ENCODE measurements at regions of chr21 and their contacts with region 1.

Region 1: GRCh38 chr21:36419996-36420395 is 34.8 kb downstream of the CHAF1B start:
- DNase-seq: peak; percentile 70 to 79
- H3K4me3 ChIP-seq: no peak overlapping the region
- H3K27ac ChIP-seq: no peak overlapping the region
- H3K4me1 ChIP-seq: peaks cover 0 to 4% (median 4%) of the 10 kb centered on the region in 4 experiments; a peak in 4 of 7 replicates
- H3K27me3 ChIP-seq: no peaks in the 10 kb centered on the region
- CTCF ChIP-seq: peak; percentile 70 to 87 (median 75)
- EP300 ChIP-seq: no peak
- POLR2A ChIP-seq: no peak
- RAD21 ChIP-seq: peak; percentile 81 to 83

Region 2: GRCh38 chr21:36429947-36430546 is 10.1 kb after region 1 on chr21:
- CTCF ChIA-PET with region 1: interaction called, 16 read pairs
- POLR2A ChIA-PET with region 1: no interaction called
- DNase-seq: peak in 1 of 2 experiments; percentile 54
- H3K4me3 ChIP-seq: no peak overlapping the region
- H3K27ac ChIP-seq: no peak overlapping the region
- H3K4me1 ChIP-seq: no peaks in the 10 kb centered on the region; a peak in 3 of 7 replicates
- H3K27me3 ChIP-seq: no peaks in the 10 kb centered on the region
- CTCF ChIP-seq: peak in 1 of 3 experiments; percentile 6; a peak in 1 of 4 replicates
- EP300 ChIP-seq: no peak
- POLR2A ChIP-seq: no peak
- RAD21 ChIP-seq: 0 out of 4 replicates have a peak, but pooled peaks of 1 of the 2 experiments have one; percentile 1

Region 3: DNA sequence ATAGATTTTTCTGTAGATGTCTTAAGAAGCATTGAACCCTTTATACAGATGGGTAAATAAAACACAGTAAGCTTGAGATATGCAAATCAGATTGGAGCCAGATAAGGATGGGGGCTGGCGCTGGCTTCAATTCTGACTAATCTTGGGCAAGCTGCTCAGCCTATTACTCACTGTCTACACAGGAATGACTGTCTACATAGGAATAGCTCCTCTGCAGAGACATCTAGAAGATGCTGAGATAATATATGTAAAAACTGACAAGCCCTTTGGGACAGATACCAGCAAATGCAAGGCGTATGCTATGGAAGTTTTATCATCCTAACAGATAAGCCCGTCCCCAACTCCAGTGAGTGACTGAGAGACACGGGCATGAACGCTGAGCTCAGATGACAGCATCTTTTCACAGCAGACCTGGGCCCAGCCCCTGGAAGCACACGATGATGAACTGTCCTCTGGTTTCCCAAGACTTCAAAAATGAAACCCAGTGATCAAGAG is 58.3 kb after region 1 on chr21:
- CTCF ChIA-PET with region 1: interaction called, 17 read pairs
- POLR2A ChIA-PET with region 1: no interaction called
- DNase-seq: no peak
- H3K4me3 ChIP-seq: no peak overlapping the region
- H3K27ac ChIP-seq: no peak overlapping the region
- H3K4me1 ChIP-seq: no peaks in the 10 kb centered on the region
- H3K27me3 ChIP-seq: no peaks in the 10 kb centered on the region
- CTCF ChIP-seq: no peak
- EP300 ChIP-seq: no peak
- POLR2A ChIP-seq: no peak
- RAD21 ChIP-seq: no peak